GM10248 (cell line): ENCODE measurements at regions of chr19 and their contacts with region 1.

Region 1: GRCh38 chr19:13861732-13862531 is 15.0 kb upstream of the NANOS3 start:
- DNase-seq: peak; percentile 93
- CTCF ChIP-seq: peak; percentile 97

Region 2: GRCh38 chr19:13007292-13008045 is 854.5 kb before region 1 on chr19:
- CTCF ChIA-PET with region 1: no interaction called
- POLR2A ChIA-PET with region 1: interaction called, 11 read pairs
- DNase-seq: no peak
- CTCF ChIP-seq: no peak

Region 3: GRCh38 chr19:13774217-13775191 is 87.4 kb before region 1 on chr19 and contains the start of gene C19orf53:
- CTCF ChIA-PET with region 1: interaction called, 78 read pairs
- POLR2A ChIA-PET with region 1: no interaction called
- DNase-seq: peak; percentile 94
- CTCF ChIP-seq: no peak

Region 4: DNA sequence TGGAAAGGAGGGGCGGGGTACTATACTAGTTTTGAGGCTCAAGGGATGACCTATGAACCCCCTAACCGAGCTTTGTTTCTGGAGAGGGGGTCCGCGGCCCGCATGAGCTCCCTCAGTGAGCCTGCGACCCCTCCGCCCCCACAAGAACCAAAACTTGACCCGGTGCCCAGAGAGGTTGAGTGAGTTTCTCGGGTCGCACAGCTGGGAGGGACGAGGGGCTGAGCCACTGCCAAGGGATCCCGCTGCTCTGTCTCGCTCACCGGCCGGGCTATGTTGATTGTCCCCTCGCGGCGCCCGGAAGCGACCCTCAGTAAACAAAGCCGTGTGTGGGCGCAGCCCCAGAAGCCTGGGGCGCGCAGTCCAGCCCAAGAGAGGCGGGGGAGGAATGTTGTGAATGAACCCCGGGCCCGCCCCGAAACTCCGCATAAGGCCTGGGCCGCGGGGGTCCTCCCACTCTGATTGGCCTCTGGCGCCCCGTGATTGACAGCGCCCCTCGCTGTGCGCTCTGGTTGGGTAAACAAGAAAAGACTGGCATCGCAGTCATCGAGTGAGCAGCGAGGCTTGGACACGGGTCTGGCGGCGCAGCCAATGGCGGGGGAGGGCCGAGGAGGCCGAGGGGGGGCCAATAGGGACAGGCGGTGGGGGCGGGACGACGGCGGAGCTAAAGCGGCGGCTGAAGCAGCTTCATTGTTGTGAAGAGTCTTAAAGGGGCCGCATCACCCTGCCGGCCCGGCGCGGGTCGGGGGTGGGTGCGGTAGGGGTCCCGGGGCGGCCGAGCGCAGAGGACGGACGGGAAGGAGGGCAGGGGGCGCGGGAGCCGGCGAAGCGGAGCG is 67.0 kb before region 1 on chr19 and contains the start of gene ZSWIM4:
- CTCF ChIA-PET with region 1: interaction called, 42 read pairs
- POLR2A ChIA-PET with region 1: interaction called, 3 read pairs
- DNase-seq: peak; percentile 98
- CTCF ChIP-seq: no peak

Region 5: GRCh38 chr19:13839130-13839937 is 22.6 kb before region 1 on chr19:
- CTCF ChIA-PET with region 1: interaction called, 35 read pairs
- POLR2A ChIA-PET with region 1: interaction called, 37 read pairs
- DNase-seq: peak; percentile 89
- CTCF ChIP-seq: no peak

Region 6: GRCh38 chr19:13872695-13873389 is 10.9 kb after region 1 on chr19:
- CTCF ChIA-PET with region 1: interaction called, 34 read pairs
- POLR2A ChIA-PET with region 1: no interaction called
- DNase-seq: peak; percentile 65
- CTCF ChIP-seq: peak; percentile 47

Region 7: GRCh38 chr19:13986348-13986904 is 124.5 kb after region 1 on chr19:
- CTCF ChIA-PET with region 1: no interaction called
- POLR2A ChIA-PET with region 1: no interaction called
- DNase-seq: peak; percentile 99
- CTCF ChIP-seq: no peak